Dorsolateral prefrontal cortex (tissue), 120 donors: ENCODE measurements at regions of chr13 and their contacts with region 1.

Region 1: DNA sequence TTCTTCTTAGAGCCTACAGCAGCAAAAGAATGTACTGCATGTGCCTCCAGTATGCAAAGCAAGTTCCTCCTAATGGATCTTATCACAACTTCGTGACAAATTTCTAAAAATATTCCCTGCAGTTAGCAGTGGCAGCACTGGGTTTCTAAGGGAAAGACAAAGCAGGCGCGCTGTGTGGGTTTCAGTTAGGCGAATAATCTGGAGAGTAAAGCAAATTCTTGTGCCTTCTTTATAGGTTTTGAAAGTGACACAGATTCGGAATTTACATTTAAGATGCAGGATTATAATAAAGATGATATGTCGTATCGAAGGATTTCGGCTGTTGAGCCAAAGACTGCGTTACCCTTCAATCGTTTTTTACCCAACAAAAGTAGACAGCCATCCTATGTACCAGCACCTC is 167.9 kb downstream of the LMO7 start:
- DNase-seq: peak in 1 of 10 donors; percentile 21
- H3K4me3 ChIP-seq: peak overlapping the region in 45 of 59 donors; percentile 3 to 54 (median 35)
- H3K27ac ChIP-seq: peak overlapping the region in 53 of 59 donors; percentile 3 to 84 (median 62)
- H3K27me3 ChIP-seq: no peaks in the 10 kb centered on the region
- CTCF ChIP-seq: no peak

Region 2: DNA sequence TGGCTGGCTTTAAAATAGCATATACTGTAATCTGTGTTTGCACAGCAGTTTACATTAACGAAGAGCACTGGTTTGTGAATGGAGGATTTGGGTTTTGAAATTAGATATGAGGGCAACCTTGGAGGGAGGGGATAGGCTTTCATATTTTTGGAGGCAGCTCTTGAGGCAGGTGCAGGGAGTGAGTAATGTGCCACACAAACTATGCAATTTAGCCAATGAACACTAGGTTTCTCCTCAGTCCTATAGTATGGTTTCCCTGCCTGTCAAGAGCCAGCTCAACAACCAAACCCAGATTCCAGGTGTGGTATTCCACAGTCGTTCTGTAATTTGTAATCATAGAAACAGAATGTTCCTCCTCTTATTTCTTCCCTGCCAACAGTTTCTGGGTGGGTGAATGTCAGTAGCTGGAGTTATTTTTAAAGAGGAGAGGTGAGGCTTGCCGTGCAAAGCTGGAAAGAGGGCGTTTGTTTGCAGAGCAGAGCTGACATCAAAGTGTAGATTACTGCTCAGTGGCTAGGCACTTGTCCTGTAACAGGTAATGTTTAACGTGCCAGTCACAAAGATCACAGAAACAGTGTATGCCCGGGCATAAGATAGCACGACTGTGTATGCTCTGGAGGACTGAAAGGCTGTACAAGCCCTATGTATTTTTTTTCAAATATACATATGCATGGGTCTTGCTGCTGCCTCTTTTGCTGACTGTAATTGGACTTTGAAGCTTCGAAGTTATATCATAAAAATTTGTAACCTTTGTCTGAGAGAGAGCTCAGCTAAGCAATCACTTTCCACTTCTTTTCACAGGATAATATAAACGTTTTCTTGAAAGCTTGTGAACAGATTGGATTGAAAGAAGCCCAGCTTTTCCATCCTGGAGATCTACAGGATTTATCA is 43.7 kb before region 1 on chr13:
- intact Hi-C with region 1: loop called in 1 of 2 experiments (anchors 2 kb)
- DNase-seq: peak in 1 of 10 donors; percentile 20
- H3K4me3 ChIP-seq: peak overlapping the region in 55 of 59 donors; percentile 8 to 61 (median 39)
- H3K27ac ChIP-seq: peak overlapping the region in 37 of 59 donors; percentile 1 to 70 (median 46)
- H3K27me3 ChIP-seq: no peaks in the 10 kb centered on the region
- CTCF ChIP-seq: no peak